ENCODE measurements at regions of chr11 and their contacts with region 1.

Region 1: DNA sequence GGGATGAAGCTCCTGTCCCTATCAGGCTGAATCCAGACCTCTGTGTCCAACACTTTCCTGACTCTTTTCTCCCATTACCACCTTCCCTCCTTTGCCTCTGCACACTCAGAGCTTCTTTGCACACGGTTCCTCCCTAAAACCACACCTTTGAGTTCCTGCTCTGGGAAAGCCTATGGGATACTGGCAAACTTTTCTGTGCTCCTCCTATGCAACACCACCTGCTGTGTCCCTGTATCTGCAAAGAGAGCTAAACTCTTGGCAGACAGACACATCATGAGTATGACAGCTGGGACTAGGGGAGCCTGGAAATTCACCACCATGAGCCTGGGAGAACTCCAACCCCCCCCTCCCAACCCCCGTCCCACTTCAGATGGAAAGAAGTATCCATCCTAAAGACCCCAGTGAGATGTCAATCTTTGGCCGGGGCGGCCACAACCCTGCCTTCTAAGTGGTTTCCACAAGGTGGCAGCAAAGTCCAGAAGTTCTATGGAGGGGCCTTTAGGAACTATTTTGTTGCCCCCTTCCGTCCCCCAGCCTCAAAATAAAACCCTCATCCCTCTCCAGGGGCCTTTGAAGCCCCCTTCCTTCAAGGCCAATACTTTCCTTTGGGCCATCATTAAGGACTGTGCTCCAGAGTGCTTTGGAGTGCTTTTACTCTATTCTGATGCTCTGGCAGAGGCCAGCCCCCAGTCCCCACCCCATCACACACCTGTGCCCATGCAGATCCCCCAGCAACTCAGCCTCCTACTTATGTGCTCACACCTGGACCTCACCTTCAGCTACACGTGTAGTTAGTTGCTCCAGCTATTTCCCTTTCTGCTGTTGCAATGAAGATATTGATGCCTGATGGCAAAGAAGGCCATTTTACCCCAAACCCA is 19.4 kb downstream of the HTR3A start:
- DNase-seq: peak in 1 of 2 experiments; percentile 86
- H3K4me3 ChIP-seq: no peak overlapping the region
- H3K27ac ChIP-seq: no peak overlapping the region
- H3K4me1 ChIP-seq: peaks cover 3 to 10% (median 6%) of the 10 kb centered on the region in 4 experiments
- H3K27me3 ChIP-seq: no peaks in the 10 kb centered on the region
- CTCF ChIP-seq: peak; percentile 62 to 76 (median 64)
- EP300 ChIP-seq: no peak
- POLR2A ChIP-seq: no peak
- RAD21 ChIP-seq: peak; percentile 81 to 86

Region 2: GRCh38 chr11:113896156-113896879 is 98.0 kb before region 1 on chr11:
- CTCF ChIA-PET with region 1: interaction called, 42 read pairs
- POLR2A ChIA-PET with region 1: no interaction called
- DNase-seq: peak in 1 of 2 experiments; percentile 56
- H3K4me3 ChIP-seq: no peak overlapping the region; a peak in 1 of 8 replicates
- H3K27ac ChIP-seq: no peak overlapping the region
- H3K4me1 ChIP-seq: peaks cover 0 to 13% (median 2%) of the 10 kb centered on the region in 4 experiments; a peak in 4 of 7 replicates
- H3K27me3 ChIP-seq: no peaks in the 10 kb centered on the region
- CTCF ChIP-seq: peak; percentile 58 to 76 (median 71)
- EP300 ChIP-seq: no peak
- POLR2A ChIP-seq: no peak
- RAD21 ChIP-seq: peak; percentile 79 to 81

Region 3: DNA sequence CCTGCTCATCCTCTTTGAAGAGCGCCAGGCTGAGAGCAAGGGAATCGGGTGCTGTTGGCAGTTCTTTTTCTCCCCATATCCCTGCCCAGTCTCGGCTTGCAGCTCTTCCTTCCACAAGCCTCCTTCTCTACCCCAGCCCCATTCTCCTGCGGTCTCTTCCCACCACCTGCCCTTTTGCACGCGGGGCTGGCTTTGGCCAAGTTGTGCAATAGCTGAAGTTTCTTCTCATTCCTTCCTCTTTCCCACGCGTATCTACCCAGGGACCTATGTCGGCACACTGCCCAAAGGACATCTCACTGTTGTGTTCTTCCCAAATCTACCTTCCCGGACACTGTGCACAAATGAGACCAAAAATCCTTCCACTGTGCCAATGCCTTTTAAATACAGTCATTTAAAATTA is 41.7 kb before region 1 on chr11:
- CTCF ChIA-PET with region 1: interaction called, 15 read pairs
- POLR2A ChIA-PET with region 1: interaction called, 3 read pairs
- DNase-seq: no peak
- H3K4me3 ChIP-seq: no peak overlapping the region
- H3K27ac ChIP-seq: no peak overlapping the region
- H3K4me1 ChIP-seq: peaks cover 2 to 11% (median 6%) of the 10 kb centered on the region in 4 experiments
- H3K27me3 ChIP-seq: peaks cover 0 to 2% (median 0%) of the 10 kb centered on the region in 4 experiments; a peak in 2 of 7 replicates
- CTCF ChIP-seq: no peak
- EP300 ChIP-seq: no peak
- POLR2A ChIP-seq: no peak
- RAD21 ChIP-seq: no peak

Region 4: GRCh38 chr11:113974741-113975470 is 19.4 kb before region 1 on chr11 and contains the start of gene HTR3A:
- CTCF ChIA-PET with region 1: interaction called, 30 read pairs
- POLR2A ChIA-PET with region 1: interaction called, 3 read pairs
- DNase-seq: peak; percentile 43 to 76
- H3K4me3 ChIP-seq: peak within 1 kb of the TSS in 1 of 4 experiments; percentile 26; a peak in 3 of 8 replicates
- H3K27ac ChIP-seq: no peak within 1 kb of the TSS
- H3K4me1 ChIP-seq: peaks cover 0 to 14% (median 13%) of the 10 kb centered on the region in 4 experiments; a peak in 6 of 7 replicates
- H3K27me3 ChIP-seq: peaks cover 0 to 3% (median 0%) of the 10 kb centered on the region in 4 experiments; a peak in 1 of 7 replicates
- CTCF ChIP-seq: peak in 1 of 3 experiments; percentile 32; a peak in 1 of 4 replicates
- EP300 ChIP-seq: no peak
- POLR2A ChIP-seq: no peak
- RAD21 ChIP-seq: no peak; a peak in 1 of 4 replicates
- total RNA-seq, gene HTR3A: 6.5 and 7.5 TPM in 2 replicates

Region 5: GRCh38 chr11:114026355-114026754 is 32.0 kb after region 1 on chr11:
- CTCF ChIA-PET with region 1: interaction called, 59 read pairs
- POLR2A ChIA-PET with region 1: no interaction called
- DNase-seq: peak in 1 of 2 experiments; percentile 10
- H3K4me3 ChIP-seq: no peak overlapping the region
- H3K27ac ChIP-seq: no peak overlapping the region
- H3K4me1 ChIP-seq: no peaks in the 10 kb centered on the region
- H3K27me3 ChIP-seq: peaks cover 0 to 2% (median 0%) of the 10 kb centered on the region in 4 experiments; a peak in 1 of 7 replicates
- CTCF ChIP-seq: peak in 2 of 3 experiments; percentile 48 to 68; a peak in 3 of 4 replicates
- EP300 ChIP-seq: no peak
- POLR2A ChIP-seq: no peak
- RAD21 ChIP-seq: peak; percentile 29 to 45; a peak in 3 of 4 replicates

Region 6: DNA sequence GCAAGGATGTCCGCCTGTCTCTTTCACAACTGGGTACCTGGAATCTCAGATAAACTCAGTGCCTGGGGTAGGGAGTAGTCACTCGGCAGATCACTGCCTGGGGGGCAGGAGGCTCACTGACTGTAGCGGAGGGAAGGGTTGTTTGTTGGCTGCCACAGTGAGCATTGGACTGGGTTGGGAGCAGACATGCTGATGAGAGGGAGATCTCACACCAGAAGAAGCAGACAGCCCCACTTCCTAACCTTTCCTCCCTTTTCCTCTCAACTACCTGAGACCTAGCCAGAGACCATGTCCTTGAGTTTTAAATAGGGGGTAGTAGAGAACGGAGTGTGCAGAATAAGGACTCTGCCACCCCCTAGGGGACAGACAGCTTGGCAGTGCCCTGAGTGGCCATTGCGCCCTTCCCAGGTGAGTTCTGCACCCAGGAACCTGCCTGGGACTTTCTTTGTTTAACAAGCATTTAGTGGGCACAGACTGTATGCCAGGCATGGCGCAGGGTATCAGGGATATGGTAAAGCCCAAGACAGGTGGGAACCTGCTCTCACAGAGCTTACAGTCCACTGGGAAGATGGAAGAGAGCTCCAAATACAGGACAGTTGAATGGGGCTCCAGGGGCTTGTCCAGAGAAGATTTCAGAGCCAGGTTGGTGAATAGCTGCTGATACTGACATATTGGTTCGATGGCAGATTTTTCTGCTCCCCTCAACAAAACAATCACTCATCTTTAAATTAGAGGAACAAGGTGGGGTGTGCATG is 186.2 kb after region 1 on chr11:
- CTCF ChIA-PET with region 1: interaction called, 35 read pairs
- POLR2A ChIA-PET with region 1: no interaction called
- DNase-seq: no peak
- H3K4me3 ChIP-seq: no peak overlapping the region
- H3K27ac ChIP-seq: no peak overlapping the region
- H3K4me1 ChIP-seq: peaks cover 0 to 6% (median 0%) of the 10 kb centered on the region in 4 experiments; a peak in 2 of 7 replicates
- H3K27me3 ChIP-seq: no peaks in the 10 kb centered on the region
- CTCF ChIP-seq: peak; percentile 75 to 87 (median 79)
- EP300 ChIP-seq: no peak
- POLR2A ChIP-seq: no peak
- RAD21 ChIP-seq: peak; percentile 82 to 87